ENCODE measurements at regions of chr9 and their contacts with region 1.

Region 1: DNA sequence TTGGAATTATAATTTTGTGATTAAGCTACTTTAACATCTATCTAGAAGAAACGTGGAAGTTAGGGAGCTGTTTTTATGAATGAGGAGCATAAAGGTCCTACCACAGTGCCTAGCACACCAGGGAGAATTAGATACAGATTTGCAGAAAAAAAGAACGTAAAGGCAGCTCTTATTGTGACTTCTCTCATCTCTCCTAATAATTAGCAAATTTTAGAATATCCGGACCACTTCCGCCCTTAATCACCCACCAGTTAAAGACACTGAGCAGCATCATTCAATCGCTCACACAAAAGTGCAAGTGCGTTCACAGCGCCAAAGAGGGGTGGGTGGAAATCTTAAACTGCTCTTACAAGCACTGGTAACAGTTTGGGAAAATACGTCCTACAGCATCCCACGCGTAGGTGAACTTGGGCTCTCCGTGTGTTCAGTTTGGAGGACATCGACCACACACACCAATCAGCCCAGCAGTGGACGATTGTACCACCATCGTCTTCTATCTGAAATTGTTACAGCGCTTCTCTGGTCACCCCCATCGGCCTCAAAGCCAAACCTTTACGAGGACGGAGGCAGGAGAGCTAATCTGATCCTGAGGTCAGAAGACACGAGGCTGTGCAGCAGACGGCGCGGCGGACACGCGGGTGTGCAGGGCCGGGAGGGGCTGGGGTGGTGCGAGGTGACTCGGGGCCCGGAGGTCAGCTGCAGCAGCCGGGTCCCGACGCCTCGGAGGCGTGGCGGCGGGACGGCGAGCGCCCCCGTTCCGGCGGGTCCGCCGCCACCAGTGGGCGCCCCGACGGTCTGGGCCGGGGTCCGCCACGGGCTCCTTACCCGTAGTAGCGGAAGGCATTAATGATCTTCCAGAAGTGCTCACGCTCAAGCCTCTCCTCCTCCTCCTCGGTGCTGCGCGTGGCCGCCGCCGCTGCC is 646 bp downstream of the CARNMT1 start:
- DNase-seq: no peak
- ATAC-seq: peak; percentile 29
- H3K4me3 Mint-ChIP-seq: peak overlapping the region; percentile 96
- H3K27ac Mint-ChIP-seq: peak overlapping the region; percentile 95
- H3K4me1 Mint-ChIP-seq: peaks cover 36% of the 10 kb centered on the region
- H3K27me3 Mint-ChIP-seq: no peaks in the 10 kb centered on the region
- CTCF ChIP-seq: no peak

Region 2: GRCh38 chr9:73132034-73132776 is 1895.2 kb before region 1 on chr9:
- CTCF ChIA-PET with region 1: no interaction called
- POLR2A ChIA-PET with region 1: no interaction called
- intact Hi-C with region 1: loop called (anchors 2 kb)
- DNase-seq: peak; percentile 17
- ATAC-seq: peak; percentile 91
- H3K4me3 Mint-ChIP-seq: peak overlapping the region; percentile 81
- H3K27ac Mint-ChIP-seq: peak overlapping the region; percentile 73
- H3K4me1 Mint-ChIP-seq: peaks cover 12% of the 10 kb centered on the region
- H3K27me3 Mint-ChIP-seq: no peaks in the 10 kb centered on the region
- CTCF ChIP-seq: no peak

Region 3: DNA sequence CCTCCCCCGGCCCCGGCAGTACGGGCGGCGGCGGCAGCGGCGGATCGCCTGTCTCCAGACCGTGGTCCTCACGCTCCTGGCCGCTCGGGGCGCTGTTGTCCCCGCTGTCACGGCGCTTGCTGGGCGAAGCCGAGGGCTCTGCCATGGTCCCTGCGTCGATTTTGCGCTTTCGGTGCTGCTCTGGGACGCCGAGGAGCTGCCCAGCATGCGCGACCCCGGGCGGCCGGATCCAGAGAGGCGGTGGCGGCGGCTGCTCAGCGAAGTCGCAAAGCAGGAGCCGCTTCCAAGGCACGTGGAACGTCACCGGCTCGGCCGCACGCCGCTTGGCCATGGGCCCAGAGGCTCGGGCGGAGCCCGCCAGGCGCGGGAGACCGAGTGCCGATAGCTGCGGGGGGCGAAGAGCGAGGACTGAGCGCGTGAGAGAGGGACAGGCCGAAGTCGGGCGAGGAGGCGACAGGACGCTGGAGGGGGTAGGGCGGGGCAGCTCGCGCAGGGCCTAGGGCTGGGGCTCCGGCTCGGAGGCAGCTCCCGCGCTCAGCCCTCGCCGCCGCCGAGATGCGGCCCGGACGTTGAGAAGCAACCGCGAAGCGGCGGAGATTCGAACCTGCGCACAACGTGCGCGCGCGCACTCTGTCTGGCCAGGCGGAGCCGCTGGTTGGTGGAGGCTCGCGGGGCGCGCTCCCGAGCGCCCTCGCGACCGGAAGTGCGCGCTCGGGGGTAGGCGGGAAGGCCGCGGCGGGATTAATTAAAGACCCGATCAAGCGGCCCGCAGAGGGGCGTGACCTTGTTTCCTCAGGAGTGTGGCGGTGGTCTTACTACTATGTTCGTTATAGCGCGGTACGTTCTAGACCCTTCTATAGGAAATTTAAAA is 74.9 kb before region 1 on chr9 and contains the start of gene C9orf40:
- CTCF ChIA-PET with region 1: interaction called, 10 read pairs
- POLR2A ChIA-PET with region 1: interaction called, 45 read pairs
- intact Hi-C with region 1: loop called (anchors 1 kb)
- DNase-seq: peak; percentile 90
- ATAC-seq: peak; percentile 89
- H3K4me3 Mint-ChIP-seq: peak within 1 kb of the TSS; percentile 99
- H3K27ac Mint-ChIP-seq: peak within 1 kb of the TSS; percentile 95
- H3K4me1 Mint-ChIP-seq: peaks cover 28% of the 10 kb centered on the region
- H3K27me3 Mint-ChIP-seq: no peaks in the 10 kb centered on the region
- CTCF ChIP-seq: peak; percentile 37
- total RNA-seq, gene C9orf40: 4.6 and 5.7 TPM in 2 replicates

Region 4: GRCh38 chr9:75053869-75054268 is 26.4 kb after region 1 on chr9:
- CTCF ChIA-PET with region 1: interaction called, 4 read pairs
- POLR2A ChIA-PET with region 1: interaction called, 24 read pairs
- intact Hi-C with region 1: loop called (anchors 1 kb)
- DNase-seq: peak; percentile 43
- ATAC-seq: peak; percentile 99
- H3K4me3 Mint-ChIP-seq: peak overlapping the region; percentile 59
- H3K27ac Mint-ChIP-seq: peak overlapping the region; percentile 74
- H3K4me1 Mint-ChIP-seq: peaks cover 30% of the 10 kb centered on the region
- H3K27me3 Mint-ChIP-seq: no peaks in the 10 kb centered on the region
- CTCF ChIP-seq: no peak

Region 5: GRCh38 chr9:75071530-75072124 is 44.2 kb after region 1 on chr9:
- CTCF ChIA-PET with region 1: interaction called, 18 read pairs
- POLR2A ChIA-PET with region 1: interaction called, 4 read pairs
- intact Hi-C with region 1: no loop called
- DNase-seq: no peak
- ATAC-seq: peak; percentile 52
- H3K4me3 Mint-ChIP-seq: no peak overlapping the region
- H3K27ac Mint-ChIP-seq: no peak overlapping the region
- H3K4me1 Mint-ChIP-seq: peaks cover 9% of the 10 kb centered on the region
- H3K27me3 Mint-ChIP-seq: no peaks in the 10 kb centered on the region
- CTCF ChIP-seq: no peak

Region 6: DNA sequence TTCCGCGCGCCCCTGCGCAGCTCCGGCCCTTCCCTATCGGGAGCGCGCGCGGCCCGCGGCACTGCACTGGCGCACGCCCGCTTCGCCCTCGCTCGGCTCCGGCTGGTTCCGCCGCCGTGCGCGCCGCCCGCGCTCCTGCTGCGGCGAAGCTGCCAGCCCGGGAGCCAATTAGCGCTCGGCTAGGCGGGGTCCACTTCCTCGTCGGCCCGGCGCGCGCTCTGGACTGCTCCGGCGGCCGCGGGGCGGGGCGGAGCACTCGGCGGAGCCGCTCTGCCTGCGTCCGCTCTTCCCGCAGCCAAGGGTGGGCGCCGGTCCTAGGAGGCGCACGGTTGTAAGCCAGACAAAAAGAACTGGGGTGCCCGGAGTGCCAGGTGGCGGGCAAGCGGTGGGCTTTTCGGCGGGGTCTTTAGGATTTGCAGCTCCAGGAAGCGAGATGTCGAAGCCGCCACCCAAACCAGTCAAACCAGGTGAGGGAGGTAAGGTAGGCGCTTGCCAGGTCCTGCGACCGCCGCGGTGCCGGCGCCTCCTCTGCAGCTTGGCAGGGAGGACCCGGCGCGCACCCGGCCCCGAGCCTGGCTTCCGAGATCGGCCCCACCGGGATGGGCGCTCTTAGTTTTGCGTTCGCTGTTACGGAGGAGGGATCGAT is 60.9 kb after region 1 on chr9 and contains the start of gene OSTF1:
- CTCF ChIA-PET with region 1: interaction called, 19 read pairs
- POLR2A ChIA-PET with region 1: interaction called, 82 read pairs
- intact Hi-C with region 1: loop called (anchors 1 kb)
- DNase-seq: peak; percentile 93
- ATAC-seq: peak; percentile 87
- H3K4me3 Mint-ChIP-seq: peak within 1 kb of the TSS; percentile 96
- H3K27ac Mint-ChIP-seq: peak within 1 kb of the TSS; percentile 88
- H3K4me1 Mint-ChIP-seq: peaks cover 51% of the 10 kb centered on the region
- H3K27me3 Mint-ChIP-seq: no peaks in the 10 kb centered on the region
- CTCF ChIP-seq: no peak
- total RNA-seq, gene OSTF1: 59.7 and 60.1 TPM in 2 replicates